ENCODE measurements at regions of chr5 and their contacts with region 1.

Region 1: GRCh38 chr5:178590141-178590923 is at the start of gene COL23A1:
- DNase-seq: peak; percentile 66 to 74 (median 70)
- ATAC-seq: peak; percentile 89
- H3K4me3 ChIP-seq: peak within 1 kb of the TSS; percentile 33
- H3K27ac ChIP-seq: no peak within 1 kb of the TSS
- H3K4me1 ChIP-seq: peaks cover 0 to 16% of the 10 kb centered on the region in 2 experiments; a peak in 3 of 5 replicates
- H3K27me3 ChIP-seq: peaks cover 24 to 41% of the 10 kb centered on the region in 2 experiments
- CTCF ChIP-seq: peak; percentile 82 to 93 (median 88)
- EP300 ChIP-seq: no peak
- POLR2A ChIP-seq: no peak
- RAD21 ChIP-seq: peak; percentile 90 to 91
- polyA plus RNA-seq, gene COL23A1: not detected

Region 2: GRCh38 chr5:178279725-178280438 is 310.4 kb before region 1 on chr5:
- CTCF ChIA-PET with region 1: interaction called, 35 read pairs
- POLR2A ChIA-PET with region 1: interaction called, 5 read pairs
- in situ Hi-C with region 1: loop called (anchors 5 kb)
- intact Hi-C with region 1: loop called (anchors 1 kb)
- DNase-seq: peak; percentile 85 to 89 (median 87)
- ATAC-seq: peak; percentile 99
- H3K4me3 ChIP-seq: no peak overlapping the region
- H3K27ac ChIP-seq: no peak overlapping the region
- H3K4me1 ChIP-seq: peaks cover 0 to 12% of the 10 kb centered on the region in 2 experiments; a peak in 3 of 5 replicates
- H3K27me3 ChIP-seq: peaks cover 12 to 64% of the 10 kb centered on the region in 2 experiments; a peak in 4 of 5 replicates
- CTCF ChIP-seq: peak; percentile 96 to 97 (median 96)
- EP300 ChIP-seq: no peak
- POLR2A ChIP-seq: no peak
- RAD21 ChIP-seq: peak; percentile 93 to 98

Region 3: DNA sequence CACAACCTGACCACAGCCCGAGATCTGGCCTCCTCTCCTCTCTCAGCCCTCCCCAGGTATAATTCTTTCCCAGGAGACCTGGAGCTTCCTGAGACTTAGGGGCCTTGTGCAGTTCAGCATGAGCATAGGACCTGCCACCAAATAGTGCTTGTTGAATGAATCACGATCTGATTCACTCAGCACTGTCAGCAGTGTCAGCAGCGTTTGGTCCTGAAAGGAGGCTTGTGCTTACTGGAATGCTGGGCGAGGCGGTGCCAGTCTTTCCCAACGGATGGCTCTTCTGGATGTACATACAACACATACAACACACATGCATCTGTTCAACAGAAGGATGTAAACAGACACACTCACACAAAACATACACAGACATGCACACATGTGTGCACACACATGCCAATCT is 173.4 kb before region 1 on chr5:
- CTCF ChIA-PET with region 1: interaction called, 12 read pairs
- POLR2A ChIA-PET with region 1: no interaction called
- in situ Hi-C with region 1: no loop called
- intact Hi-C with region 1: loop called (anchors 1 kb)
- DNase-seq: no peak
- ATAC-seq: no peak
- H3K4me3 ChIP-seq: no peak overlapping the region
- H3K27ac ChIP-seq: no peak overlapping the region
- H3K4me1 ChIP-seq: peaks cover 9 to 11% of the 10 kb centered on the region in 2 experiments
- H3K27me3 ChIP-seq: peaks cover 7 to 42% of the 10 kb centered on the region in 2 experiments; a peak in 4 of 5 replicates
- CTCF ChIP-seq: no peak
- EP300 ChIP-seq: no peak
- POLR2A ChIP-seq: no peak
- RAD21 ChIP-seq: no peak

Region 4: DNA sequence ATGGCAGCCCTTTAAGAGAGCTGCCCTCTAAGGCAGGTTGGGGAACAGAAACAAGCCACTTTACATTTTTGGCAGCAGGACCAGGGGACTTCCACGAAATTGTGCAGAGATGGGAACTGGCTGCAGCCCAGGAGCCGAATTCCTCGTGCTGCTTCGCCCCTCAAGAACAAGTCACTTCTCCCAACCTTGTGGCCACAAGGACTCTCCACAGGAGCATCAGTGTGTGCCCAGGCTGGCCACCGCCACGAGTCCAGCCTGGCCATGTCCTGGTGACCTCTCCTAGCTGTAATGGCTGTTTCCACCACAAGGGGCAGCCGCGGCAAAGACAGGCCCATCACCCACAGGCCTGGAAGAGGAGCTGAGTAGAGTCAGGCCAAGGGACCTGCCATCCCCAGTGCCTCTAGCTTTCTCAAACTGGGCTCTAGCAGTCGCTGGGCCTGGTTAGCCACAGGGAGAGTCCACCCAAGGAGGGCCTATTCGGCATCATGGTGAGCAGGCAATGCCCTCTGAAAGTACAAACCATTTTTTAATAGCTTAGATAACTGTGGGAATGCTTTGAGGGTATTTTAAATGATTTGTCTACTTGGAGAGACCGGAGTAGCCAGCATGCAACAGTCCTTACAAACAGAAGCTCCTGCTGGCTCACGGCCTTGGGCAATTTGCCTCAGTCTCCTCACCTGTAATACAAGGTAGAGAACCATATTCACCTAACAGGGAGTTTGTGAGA is 129.2 kb before region 1 on chr5:
- CTCF ChIA-PET with region 1: no interaction called
- POLR2A ChIA-PET with region 1: interaction called, 4 read pairs
- in situ Hi-C with region 1: no loop called
- intact Hi-C with region 1: loop called (anchors 2 kb)
- DNase-seq: peak; percentile 83 to 85 (median 84)
- ATAC-seq: peak; percentile 100
- H3K4me3 ChIP-seq: no peak overlapping the region
- H3K27ac ChIP-seq: no peak overlapping the region
- H3K4me1 ChIP-seq: peaks cover 0 to 10% of the 10 kb centered on the region in 2 experiments; a peak in 3 of 5 replicates
- H3K27me3 ChIP-seq: peaks cover 0 to 6% of the 10 kb centered on the region in 2 experiments; a peak in 1 of 5 replicates
- CTCF ChIP-seq: peak; percentile 85 to 95 (median 87)
- EP300 ChIP-seq: no peak
- POLR2A ChIP-seq: no peak
- RAD21 ChIP-seq: peak; percentile 65 to 68

Measured in K562 (cell line).